Ovary (tissue), 10 donors: ENCODE measurements at regions of chr20 and their contacts with region 1.

Region 1: DNA sequence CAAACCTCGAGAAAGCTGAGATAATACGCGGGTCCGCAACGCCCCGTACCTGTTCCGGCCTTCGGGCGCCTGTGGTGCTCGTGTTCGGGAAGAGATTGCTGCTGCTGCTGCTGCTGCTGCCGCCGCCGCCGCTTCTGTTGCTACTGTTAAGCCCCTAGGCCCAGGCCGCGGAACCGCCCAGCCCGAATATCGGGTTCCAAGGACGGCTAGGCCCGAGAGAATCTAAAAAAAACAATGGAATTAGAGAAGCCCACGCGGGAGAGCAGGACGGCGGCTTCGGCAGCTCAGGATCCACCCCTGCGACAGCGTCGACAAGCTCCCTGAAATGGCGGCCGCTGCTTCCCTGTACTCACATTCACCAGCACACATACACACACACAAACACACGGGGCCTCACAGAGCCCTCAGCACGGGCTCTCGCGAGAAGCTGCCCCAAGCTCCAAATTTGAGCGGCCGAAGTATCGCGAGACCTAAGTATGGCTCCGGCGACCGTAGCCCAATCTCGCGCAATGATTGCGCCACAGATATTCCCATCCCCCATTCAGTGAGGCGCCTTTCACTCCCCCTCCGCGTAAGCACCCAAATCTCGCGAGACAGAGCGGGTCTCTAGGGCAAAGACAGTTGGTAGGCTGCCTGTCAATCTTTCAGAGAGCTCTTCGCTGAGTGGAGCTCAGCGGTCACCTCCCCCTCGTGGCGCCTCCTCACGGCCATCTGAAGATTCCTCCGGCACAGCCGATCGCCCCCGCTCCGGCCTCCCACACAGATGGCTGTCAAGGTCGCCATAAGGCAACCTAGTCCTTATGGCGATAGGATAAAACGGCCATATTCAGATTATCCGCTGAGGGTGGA is at the start of gene RBM39:
- DNase-seq: peak; percentile 99 to 100 (median 100)
- H3K4me3 ChIP-seq: peak within 1 kb of the TSS; percentile 75
- H3K27ac ChIP-seq: peak within 1 kb of the TSS; percentile 96 to 100
- H3K4me1 ChIP-seq: peaks cover 4% of the 10 kb centered on the region
- H3K27me3 ChIP-seq: no peaks in the 10 kb centered on the region
- CTCF ChIP-seq: peak; percentile 10 to 63 (median 60)
- EP300 ChIP-seq: peak; percentile 61
- POLR2A ChIP-seq: peak; percentile 97
- total RNA-seq, gene RBM39: 277 to 389 (median 356) TPM

Region 2: GRCh38 chr20:35619196-35620095 is 122.7 kb before region 1 on chr20:
- intact Hi-C with region 1: loop called in 1 of 4 experiments (anchors 5 kb)
- DNase-seq: peak; percentile 76 to 87 (median 82)
- H3K4me3 ChIP-seq: peak overlapping the region; percentile 46
- H3K27ac ChIP-seq: peak overlapping the region; percentile 73 to 82
- H3K4me1 ChIP-seq: peaks cover 1% of the 10 kb centered on the region
- H3K27me3 ChIP-seq: no peaks in the 10 kb centered on the region
- CTCF ChIP-seq: no peak
- EP300 ChIP-seq: no peak
- POLR2A ChIP-seq: no peak

Region 3: DNA sequence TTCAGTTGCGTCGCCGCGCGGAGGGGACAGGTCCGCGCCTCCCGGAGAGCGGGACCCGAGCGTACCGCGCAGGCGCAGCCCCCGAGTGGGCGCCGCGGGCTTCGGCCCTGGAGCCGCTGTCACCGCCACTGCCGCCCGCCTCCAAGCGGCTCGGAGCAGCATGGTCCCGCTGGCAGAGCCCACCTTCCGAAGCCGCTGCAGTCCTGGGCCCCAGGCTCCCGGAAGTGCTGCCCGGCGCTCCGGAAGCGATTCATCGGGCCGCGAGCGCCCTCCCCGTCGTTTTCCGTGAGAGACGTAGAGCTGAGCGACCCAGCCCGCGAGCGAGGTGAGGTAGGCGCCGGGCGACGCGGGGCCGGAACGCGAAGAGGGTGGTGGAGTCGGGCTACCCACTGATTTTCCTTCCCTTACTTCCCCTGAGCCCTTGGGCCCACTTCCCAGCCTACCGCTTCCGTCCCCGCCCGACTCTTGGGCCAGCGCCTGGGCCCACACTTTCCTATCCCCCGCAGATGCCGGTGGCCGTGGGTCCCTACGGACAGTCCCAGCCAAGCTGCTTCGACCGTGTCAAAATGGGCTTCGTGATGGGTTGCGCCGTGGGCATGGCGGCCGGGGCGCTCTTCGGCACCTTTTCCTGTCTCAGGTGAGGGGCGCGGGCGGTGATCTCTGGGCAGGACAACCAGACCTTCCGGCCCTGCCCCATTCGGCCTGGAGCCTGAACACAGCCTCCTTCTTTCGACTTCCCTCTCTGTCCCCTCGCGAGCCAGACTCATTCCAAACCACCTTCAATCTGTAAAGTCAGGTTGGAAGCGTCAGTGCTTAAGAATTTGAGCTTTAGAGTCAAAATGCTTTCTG is 42.8 kb before region 1 on chr20 and contains the starts of genes NFS1 and ROMO1:
- intact Hi-C with region 1: loop called in 1 of 4 experiments (anchors 5 kb)
- DNase-seq: peak; percentile 79 to 91 (median 85)
- H3K4me3 ChIP-seq: peak within 1 kb of the TSS; percentile 67
- H3K27ac ChIP-seq: peak within 1 kb of the TSS; percentile 65 to 77
- H3K4me1 ChIP-seq: peaks cover 7% of the 10 kb centered on the region
- H3K27me3 ChIP-seq: no peaks in the 10 kb centered on the region
- CTCF ChIP-seq: peak in 2 of 3 donors; percentile 23 to 31
- EP300 ChIP-seq: no peak
- POLR2A ChIP-seq: peak; percentile 66
- total RNA-seq, gene NFS1: 17.3 to 33.7 (median 29.4) TPM
- total RNA-seq, gene ROMO1: 98.7 to 404 (median 112) TPM

Region 4: GRCh38 chr20:35771689-35772562 is 29.8 kb after region 1 on chr20 and contains the start of gene PHF20:
- intact Hi-C with region 1: loop called in 1 of 4 experiments (anchors 2 kb)
- DNase-seq: peak; percentile 99 to 100 (median 100)
- H3K4me3 ChIP-seq: peak within 1 kb of the TSS; percentile 67
- H3K27ac ChIP-seq: peak within 1 kb of the TSS; percentile 85 to 88
- H3K4me1 ChIP-seq: peaks cover 11% of the 10 kb centered on the region
- H3K27me3 ChIP-seq: no peaks in the 10 kb centered on the region
- CTCF ChIP-seq: peak in 2 of 3 donors; percentile 39 to 71
- EP300 ChIP-seq: peak; percentile 98
- POLR2A ChIP-seq: peak; percentile 89
- total RNA-seq, gene PHF20: 41.4 to 70.0 (median 48.0) TPM

Region 5: GRCh38 chr20:35821807-35822242 is 79.7 kb after region 1 on chr20:
- intact Hi-C with region 1: no loop called
- DNase-seq: no peak
- H3K4me3 ChIP-seq: no peak overlapping the region
- H3K27ac ChIP-seq: no peak overlapping the region
- H3K4me1 ChIP-seq: peaks cover 1% of the 10 kb centered on the region
- H3K27me3 ChIP-seq: no peaks in the 10 kb centered on the region
- CTCF ChIP-seq: no peak
- EP300 ChIP-seq: no peak
- POLR2A ChIP-seq: no peak

Region 6: GRCh38 chr20:35883778-35884540 is 141.8 kb after region 1 on chr20:
- intact Hi-C with region 1: loop called in 1 of 4 experiments (anchors 10 kb)
- DNase-seq: peak; percentile 69 to 87 (median 77)
- H3K4me3 ChIP-seq: no peak overlapping the region
- H3K27ac ChIP-seq: peak overlapping the region; percentile 14 to 51
- H3K4me1 ChIP-seq: peaks cover 2% of the 10 kb centered on the region
- H3K27me3 ChIP-seq: no peaks in the 10 kb centered on the region
- CTCF ChIP-seq: peak; percentile 36 to 78 (median 73)
- EP300 ChIP-seq: peak; percentile 93
- POLR2A ChIP-seq: peak; percentile 11

Region 7: DNA sequence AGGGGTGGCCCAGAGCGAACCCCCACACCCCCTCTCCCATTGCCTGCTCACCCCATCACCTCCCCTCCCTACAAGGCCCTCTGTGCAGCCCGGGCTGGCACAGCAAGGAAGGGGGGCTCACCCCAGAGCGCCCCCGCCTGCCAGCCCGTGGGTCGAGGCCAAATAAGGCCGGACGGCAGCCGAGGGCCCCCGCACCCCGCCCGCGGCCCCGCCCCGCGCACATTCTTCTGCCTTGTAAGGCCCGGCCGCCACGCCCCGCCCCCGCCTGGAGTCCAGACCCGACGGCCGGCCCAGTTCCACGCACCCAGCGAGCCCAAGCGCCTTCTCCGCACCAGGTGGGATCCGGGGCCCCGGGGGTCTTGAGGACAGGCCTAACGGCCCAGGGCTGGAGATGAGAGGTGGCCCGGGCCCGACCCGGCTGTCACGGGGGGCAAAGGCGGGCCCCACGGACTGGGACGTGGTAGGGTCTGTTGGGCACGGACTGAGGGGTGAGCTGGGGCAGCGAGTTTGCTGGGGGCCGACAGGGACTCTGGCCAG is 799.2 kb after region 1 on chr20 and contains the start of gene MYL9:
- intact Hi-C with region 1: loop called in 1 of 4 experiments (anchors 10 kb)
- DNase-seq: peak; percentile 94 to 97 (median 96)
- H3K4me3 ChIP-seq: peak within 1 kb of the TSS; percentile 90
- H3K27ac ChIP-seq: peak within 1 kb of the TSS; percentile 89 to 94
- H3K4me1 ChIP-seq: peaks cover 28% of the 10 kb centered on the region
- H3K27me3 ChIP-seq: no peaks in the 10 kb centered on the region
- CTCF ChIP-seq: no peak
- EP300 ChIP-seq: no peak
- POLR2A ChIP-seq: peak; percentile 71
- total RNA-seq, gene MYL9: 69.5 to 1,408 (median 681) TPM